ENCODE measurements at regions of chr1 and their contacts with region 1.

Region 1: GRCh38 chr1:109532365-109533136 is 7.1 kb upstream of the GPR61 start:
- DNase-seq: peak in 1 of 2 experiments; percentile 97
- H3K4me3 ChIP-seq: peak overlapping the region in 2 of 4 experiments; percentile 10 to 40; a peak in 1 of 8 replicates
- H3K27ac ChIP-seq: no peak overlapping the region
- H3K4me1 ChIP-seq: peaks cover 0 to 3% (median 1%) of the 10 kb centered on the region in 4 experiments; a peak in 4 of 7 replicates
- H3K27me3 ChIP-seq: no peaks in the 10 kb centered on the region
- CTCF ChIP-seq: peak; percentile 92 to 98 (median 96)
- EP300 ChIP-seq: no peak
- POLR2A ChIP-seq: no peak
- RAD21 ChIP-seq: peak; percentile 93

Region 2: DNA sequence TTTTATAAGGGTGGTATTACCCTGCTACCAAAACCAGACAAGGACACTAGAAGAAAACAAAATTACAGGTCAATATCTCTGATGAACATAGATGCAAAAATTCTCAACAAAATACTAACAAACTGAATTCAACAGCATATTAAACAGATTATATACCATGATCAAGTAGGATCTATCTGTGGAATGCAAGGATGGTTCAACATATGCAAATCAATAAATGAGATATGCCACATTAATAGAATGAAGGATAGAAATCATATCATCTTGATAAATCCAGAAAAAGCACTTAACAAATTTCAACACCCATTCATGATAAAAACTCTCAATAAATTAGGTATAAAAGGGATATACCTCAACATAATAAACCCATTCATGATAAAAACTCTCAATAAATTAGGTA is 201.4 kb before region 1 on chr1:
- CTCF ChIA-PET with region 1: no interaction called
- POLR2A ChIA-PET with region 1: no interaction called
- DNase-seq: no peak
- H3K4me3 ChIP-seq: no peak overlapping the region
- H3K27ac ChIP-seq: no peak overlapping the region
- H3K4me1 ChIP-seq: no peaks in the 10 kb centered on the region
- H3K27me3 ChIP-seq: no peaks in the 10 kb centered on the region
- CTCF ChIP-seq: no peak
- EP300 ChIP-seq: no peak
- POLR2A ChIP-seq: no peak
- RAD21 ChIP-seq: no peak

Region 3: GRCh38 chr1:109412551-109412950 is 120.0 kb before region 1 on chr1:
- CTCF ChIA-PET with region 1: interaction called, 11 read pairs
- POLR2A ChIA-PET with region 1: no interaction called
- DNase-seq: no peak
- H3K4me3 ChIP-seq: no peak overlapping the region
- H3K27ac ChIP-seq: no peak overlapping the region
- H3K4me1 ChIP-seq: no peaks in the 10 kb centered on the region
- H3K27me3 ChIP-seq: peaks cover 0 to 1% (median 0%) of the 10 kb centered on the region in 4 experiments; a peak in 1 of 7 replicates
- CTCF ChIP-seq: no peak
- EP300 ChIP-seq: no peak
- POLR2A ChIP-seq: no peak
- RAD21 ChIP-seq: no peak

Region 4: GRCh38 chr1:109493805-109494539 is 38.6 kb before region 1 on chr1 and contains the start of gene CYB561D1:
- CTCF ChIA-PET with region 1: interaction called, 1,755 read pairs
- POLR2A ChIA-PET with region 1: interaction called, 20 read pairs
- DNase-seq: peak in 1 of 2 experiments; percentile 96
- H3K4me3 ChIP-seq: peak within 1 kb of the TSS; percentile 58 to 90 (median 80)
- H3K27ac ChIP-seq: no peak within 1 kb of the TSS
- H3K4me1 ChIP-seq: peaks cover 0 to 11% (median 4%) of the 10 kb centered on the region in 4 experiments; a peak in 4 of 7 replicates
- H3K27me3 ChIP-seq: no peaks in the 10 kb centered on the region
- CTCF ChIP-seq: peak; percentile 76 to 91 (median 81)
- EP300 ChIP-seq: peak in 1 of 2 experiments; percentile 38; a peak in 1 of 3 replicates
- POLR2A ChIP-seq: 0 out of 3 replicates have a peak, but pooled peaks of 1 of the 2 experiments have one; percentile 20
- RAD21 ChIP-seq: peak; percentile 43 to 52; a peak in 3 of 4 replicates
- total RNA-seq, gene CYB561D1: 3.6 and 4.3 TPM in 2 replicates

Region 5: GRCh38 chr1:109521002-109521951 is 11.3 kb before region 1 on chr1:
- CTCF ChIA-PET with region 1: interaction called, 1,755 read pairs
- POLR2A ChIA-PET with region 1: interaction called, 3 read pairs
- DNase-seq: no peak
- H3K4me3 ChIP-seq: no peak overlapping the region
- H3K27ac ChIP-seq: no peak overlapping the region
- H3K4me1 ChIP-seq: no peaks in the 10 kb centered on the region
- H3K27me3 ChIP-seq: 0 out of 7 replicates have a peak, but pooled peaks cover 0 to 2% (median 0%) of the 10 kb centered on the region in 4 experiments
- CTCF ChIP-seq: no peak
- EP300 ChIP-seq: no peak
- POLR2A ChIP-seq: no peak
- RAD21 ChIP-seq: no peak

Region 6: DNA sequence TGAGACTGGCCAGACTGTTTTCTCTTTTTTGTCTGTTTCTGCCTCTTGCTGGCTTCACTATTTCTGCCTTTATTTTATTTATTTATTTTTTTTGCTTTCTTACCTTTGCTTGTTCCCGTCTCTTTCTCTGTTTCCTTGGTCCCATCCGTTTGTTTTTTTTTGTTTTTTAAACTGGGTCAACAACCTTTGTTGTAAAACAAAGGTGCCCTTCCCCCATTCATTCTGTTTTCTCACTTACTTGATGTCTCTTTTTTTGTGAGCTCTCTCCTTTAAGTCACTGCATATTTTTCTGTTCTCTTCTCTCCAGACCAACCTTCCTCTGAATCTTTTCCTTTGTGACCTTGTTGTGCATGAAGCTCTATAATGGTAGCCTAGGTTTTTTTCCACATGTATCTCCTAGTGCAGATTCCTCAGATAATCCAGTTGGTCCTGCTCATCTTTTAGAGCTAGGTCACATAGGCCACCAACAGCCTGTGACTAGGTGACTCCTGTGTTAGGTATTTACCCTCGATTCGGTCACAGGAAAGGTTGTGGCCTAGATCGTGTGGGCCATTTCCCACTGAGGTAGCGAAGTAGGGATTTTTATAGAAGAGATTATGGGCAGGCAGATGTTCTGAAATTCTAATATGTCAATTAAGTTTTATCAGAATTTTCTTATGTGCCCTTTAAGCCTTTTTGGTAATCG is 31.8 kb after region 1 on chr1:
- CTCF ChIA-PET with region 1: interaction called, 13 read pairs
- POLR2A ChIA-PET with region 1: no interaction called
- DNase-seq: no peak
- H3K4me3 ChIP-seq: peak overlapping the region in 3 of 4 experiments; percentile 2 to 30 (median 6); a peak in 3 of 8 replicates
- H3K27ac ChIP-seq: peak overlapping the region; percentile 59
- H3K4me1 ChIP-seq: peaks cover 0 to 23% (median 7%) of the 10 kb centered on the region in 4 experiments; a peak in 6 of 7 replicates
- H3K27me3 ChIP-seq: no peaks in the 10 kb centered on the region
- CTCF ChIP-seq: no peak
- EP300 ChIP-seq: no peak
- POLR2A ChIP-seq: peak in 1 of 2 experiments; percentile 36; a peak in 1 of 3 replicates
- RAD21 ChIP-seq: no peak